ENCODE measurements at regions of chr12 and their contacts with region 1.

Region 1: DNA sequence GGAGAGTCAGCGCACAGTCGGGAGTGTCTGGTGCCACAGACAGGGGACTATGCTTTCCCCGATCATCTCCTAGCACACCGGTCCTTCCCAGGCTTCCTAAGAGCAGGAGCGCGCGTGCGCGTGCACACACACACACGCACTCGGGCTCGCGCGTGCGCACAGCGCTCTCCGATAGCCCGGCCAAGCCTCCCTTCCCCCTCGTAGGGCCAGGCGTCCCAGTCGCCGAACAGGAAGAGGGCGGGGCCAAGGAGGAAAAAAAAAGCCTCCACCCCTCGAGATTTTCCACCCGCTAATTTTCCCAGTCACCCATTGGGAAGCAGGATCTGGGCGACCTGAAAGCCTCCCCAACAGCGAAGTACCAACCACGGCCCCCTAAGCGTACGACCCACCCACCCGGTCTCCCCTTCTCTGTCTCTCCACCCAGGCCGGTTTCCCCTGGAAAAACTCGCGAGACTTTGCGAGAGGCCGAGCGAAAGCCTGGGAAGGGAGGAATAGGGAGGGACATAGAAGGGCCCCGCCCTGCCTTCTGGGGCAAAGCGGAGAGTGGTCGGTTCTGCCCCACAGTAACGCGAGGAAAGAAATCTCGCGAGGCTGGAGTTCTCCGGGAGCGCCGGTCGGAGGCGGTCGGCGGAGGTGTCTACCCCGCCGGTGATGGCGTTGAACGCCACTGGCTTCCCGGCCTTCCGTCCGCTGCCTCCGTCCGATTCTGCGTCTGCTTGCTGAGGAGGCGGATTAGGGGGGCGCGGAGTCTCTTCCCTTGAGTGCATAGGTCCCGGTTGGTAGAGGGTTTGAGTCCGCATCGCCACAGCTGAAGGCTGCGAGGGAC is at the starts of genes FGFR1OP2 and INTS13:
- DNase-seq: peak; percentile 92 to 98
- ATAC-seq: peak; percentile 90 to 97 (median 93)
- H3K4me3 ChIP-seq: peak within 1 kb of the TSS; percentile 95
- H3K4me3 Mint-ChIP-seq: peak within 1 kb of the TSS; percentile 96
- H3K27ac ChIP-seq: peak within 1 kb of the TSS; percentile 95
- H3K27ac Mint-ChIP-seq: peak within 1 kb of the TSS; percentile 93 to 94
- H3K4me1 ChIP-seq: peaks cover 12% of the 10 kb centered on the region
- H3K4me1 Mint-ChIP-seq: peaks cover 79 to 82% of the 10 kb centered on the region in 2 donors
- H3K27me3 ChIP-seq: no peaks in the 10 kb centered on the region
- H3K27me3 Mint-ChIP-seq: no peaks in the 10 kb centered on the region
- CTCF ChIP-seq: no peak
- total RNA-seq, gene FGFR1OP2: 43.3 to 59.9 (median 45.3) TPM
- total RNA-seq, gene INTS13: 17.5 to 20.8 (median 19.8) TPM

Region 2: DNA sequence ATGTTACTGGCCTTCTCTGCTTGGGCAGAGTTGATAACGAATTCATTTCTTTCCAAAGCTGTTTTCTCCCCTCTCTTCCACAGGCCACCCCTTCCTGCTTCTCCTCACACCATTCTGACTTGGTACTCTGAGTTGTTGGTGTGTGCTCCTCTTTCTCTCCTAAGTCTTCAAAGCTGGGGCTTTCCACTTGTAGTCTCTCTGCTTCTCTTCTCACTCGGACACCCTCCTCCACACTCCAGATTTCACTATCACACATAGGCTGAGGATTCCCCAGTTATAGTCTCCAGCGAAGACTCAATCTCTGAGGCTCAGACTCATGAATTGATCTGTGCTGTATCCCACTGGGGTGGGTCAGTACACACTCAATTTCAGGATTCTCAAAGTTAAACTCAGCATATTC is 541.7 kb before region 1 on chr12:
- intact Hi-C with region 1: no loop called
- DNase-seq: no peak
- ATAC-seq: no peak
- H3K4me3 ChIP-seq: no peak overlapping the region
- H3K4me3 Mint-ChIP-seq: no peak overlapping the region
- H3K27ac ChIP-seq: no peak overlapping the region
- H3K27ac Mint-ChIP-seq: no peak overlapping the region
- H3K4me1 ChIP-seq: no peaks in the 10 kb centered on the region
- H3K4me1 Mint-ChIP-seq: no peaks in the 10 kb centered on the region
- H3K27me3 ChIP-seq: no peaks in the 10 kb centered on the region
- H3K27me3 Mint-ChIP-seq: no peaks in the 10 kb centered on the region
- CTCF ChIP-seq: no peak

Region 3: GRCh38 chr12:26832822-26833742 is 105.0 kb before region 1 on chr12 and contains the start of gene ITPR2:
- intact Hi-C with region 1: loop called (anchors 1 kb)
- DNase-seq: peak; percentile 89 to 94
- ATAC-seq: peak; percentile 89 to 96 (median 90)
- H3K4me3 ChIP-seq: peak within 1 kb of the TSS; percentile 90
- H3K4me3 Mint-ChIP-seq: peak within 1 kb of the TSS; percentile 97
- H3K27ac ChIP-seq: peak within 1 kb of the TSS; percentile 97
- H3K27ac Mint-ChIP-seq: peak within 1 kb of the TSS; percentile 97 to 98
- H3K4me1 ChIP-seq: peaks cover 17% of the 10 kb centered on the region
- H3K4me1 Mint-ChIP-seq: peaks cover 45 to 47% of the 10 kb centered on the region in 2 donors
- H3K27me3 ChIP-seq: no peaks in the 10 kb centered on the region
- H3K27me3 Mint-ChIP-seq: no peaks in the 10 kb centered on the region
- CTCF ChIP-seq: peak; percentile 22
- total RNA-seq, gene ITPR2: 59.1 to 70.7 (median 68.2) TPM

Region 4: GRCh38 chr12:26971963-26972362 is 33.9 kb after region 1 on chr12:
- intact Hi-C with region 1: loop called (anchors 1 kb)
- DNase-seq: peak; percentile 35 to 88
- ATAC-seq: peak; percentile 94 to 99 (median 99)
- H3K4me3 ChIP-seq: no peak overlapping the region
- H3K4me3 Mint-ChIP-seq: peak overlapping the region; percentile 31
- H3K27ac ChIP-seq: no peak overlapping the region
- H3K27ac Mint-ChIP-seq: peak overlapping the region; percentile 17 to 81
- H3K4me1 ChIP-seq: peaks cover 8% of the 10 kb centered on the region
- H3K4me1 Mint-ChIP-seq: peaks cover 15 to 17% of the 10 kb centered on the region in 2 donors
- H3K27me3 ChIP-seq: no peaks in the 10 kb centered on the region
- H3K27me3 Mint-ChIP-seq: no peaks in the 10 kb centered on the region
- CTCF ChIP-seq: no peak

Region 5: GRCh38 chr12:27243804-27244683 is 306.0 kb after region 1 on chr12 and contains the start of gene STK38L:
- intact Hi-C with region 1: loop called (anchors 1 kb)
- DNase-seq: peak; percentile 98
- ATAC-seq: peak; percentile 96 to 99 (median 96)
- H3K4me3 ChIP-seq: peak within 1 kb of the TSS; percentile 98
- H3K4me3 Mint-ChIP-seq: peak within 1 kb of the TSS; percentile 98
- H3K27ac ChIP-seq: peak within 1 kb of the TSS; percentile 90
- H3K27ac Mint-ChIP-seq: peak within 1 kb of the TSS; percentile 92 to 94
- H3K4me1 ChIP-seq: peaks cover 15% of the 10 kb centered on the region
- H3K4me1 Mint-ChIP-seq: peaks cover 32% of the 10 kb centered on the region in 2 donors
- H3K27me3 ChIP-seq: no peaks in the 10 kb centered on the region
- H3K27me3 Mint-ChIP-seq: no peaks in the 10 kb centered on the region
- CTCF ChIP-seq: no peak
- total RNA-seq, gene STK38L: 14.0 to 17.0 (median 15.0) TPM